ENCODE measurements at regions of chr6 and their contacts with region 1.

Region 1: DNA sequence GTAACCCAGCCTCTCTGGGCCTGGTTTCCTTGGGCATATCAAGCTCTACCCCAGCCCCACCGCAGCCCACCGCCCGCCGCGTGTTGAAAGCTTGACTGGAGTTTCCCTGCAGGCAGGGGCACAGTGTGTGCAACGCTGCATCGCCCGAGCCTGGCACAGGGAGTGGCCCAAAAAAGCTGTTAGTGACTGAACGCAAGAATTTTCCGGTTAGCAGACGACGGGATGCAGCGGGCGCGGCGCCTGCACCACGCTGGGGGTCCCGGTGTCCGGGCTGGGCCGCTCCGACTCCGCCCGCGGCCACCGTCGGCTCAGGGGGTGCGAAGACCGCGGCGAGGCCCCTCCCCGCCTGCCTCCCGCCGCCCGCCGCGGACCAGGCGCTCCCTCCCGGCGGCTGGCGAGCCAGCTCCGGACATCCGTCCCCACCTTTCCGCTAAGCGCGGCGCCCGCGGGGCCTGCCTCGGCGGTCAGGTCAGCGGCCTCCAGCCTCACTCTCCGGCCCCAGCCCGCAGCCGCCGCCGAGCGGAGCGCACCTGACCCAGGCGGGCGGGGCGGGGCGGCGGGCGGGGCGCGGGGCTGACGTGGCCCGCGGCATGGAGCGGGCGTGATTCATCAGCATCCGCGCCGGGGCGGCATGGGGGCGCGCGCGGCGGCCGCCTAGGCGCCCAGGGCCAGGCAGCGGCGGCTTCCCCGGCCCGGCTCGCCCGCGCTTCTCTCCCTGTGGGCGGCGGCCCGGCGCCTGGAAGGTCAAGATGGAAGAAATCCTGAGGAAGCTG is at the start of gene ARFGEF3:
- DNase-seq: peak; percentile 63 to 66
- H3K4me3 ChIP-seq: peak within 1 kb of the TSS; percentile 62
- H3K27ac ChIP-seq: peak within 1 kb of the TSS; percentile 52
- H3K4me1 ChIP-seq: peaks cover 24% of the 10 kb centered on the region
- H3K27me3 ChIP-seq: no peaks in the 10 kb centered on the region
- CTCF ChIP-seq: no peak
- total RNA-seq, gene ARFGEF3: 9.9 and 10.0 TPM in 2 replicates

Region 2: DNA sequence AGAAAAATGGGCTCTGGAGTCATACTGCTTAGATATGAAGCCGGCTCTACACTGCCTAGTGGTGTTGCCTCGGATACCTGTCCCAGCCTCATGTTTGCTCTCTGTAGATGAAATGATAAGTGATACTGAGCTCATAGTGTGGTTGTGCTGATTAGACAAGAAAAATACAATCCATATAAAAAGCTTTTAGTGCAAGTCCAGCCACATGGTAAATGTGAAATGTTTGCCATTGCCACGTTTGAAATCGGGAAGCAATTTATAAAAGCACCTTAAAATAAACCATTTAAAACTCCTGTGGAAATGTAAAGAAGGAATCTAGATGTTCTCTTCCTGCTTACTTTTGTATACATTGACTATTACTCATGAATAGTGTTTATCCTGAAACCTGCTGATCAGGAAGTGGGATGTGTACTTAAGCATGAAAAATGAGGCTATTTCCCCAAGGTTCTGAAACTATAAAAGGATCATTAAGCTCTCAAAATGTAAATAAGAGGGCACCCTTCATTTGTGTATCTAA is 69.9 kb after region 1 on chr6:
- CTCF ChIA-PET with region 1: interaction called, 4 read pairs
- POLR2A ChIA-PET with region 1: no interaction called
- intact Hi-C with region 1: loop called (anchors 5 kb)
- DNase-seq: peak; percentile 43 to 96
- H3K4me3 ChIP-seq: peak overlapping the region; percentile 40
- H3K27ac ChIP-seq: peak overlapping the region; percentile 95
- H3K4me1 ChIP-seq: peaks cover 89% of the 10 kb centered on the region
- H3K27me3 ChIP-seq: no peaks in the 10 kb centered on the region
- CTCF ChIP-seq: no peak

Region 3: GRCh38 chr6:138891255-138891986 is 729.9 kb after region 1 on chr6:
- CTCF ChIA-PET with region 1: no interaction called
- POLR2A ChIA-PET with region 1: interaction called, 14 read pairs
- intact Hi-C with region 1: no loop called
- DNase-seq: no peak
- H3K4me3 ChIP-seq: no peak overlapping the region
- H3K27ac ChIP-seq: no peak overlapping the region
- H3K4me1 ChIP-seq: no peaks in the 10 kb centered on the region; the same call in none of the 2 replicates
- H3K27me3 ChIP-seq: no peaks in the 10 kb centered on the region
- CTCF ChIP-seq: no peak

Measured in PC-9 (cell line).